ENCODE measurements at regions of chr19 and their contacts with region 1.

Region 1: GRCh38 chr19:56170261-56170660 is 5.5 kb upstream of the GALP start:
- DNase-seq: no peak
- H3K4me3 ChIP-seq: no peak overlapping the region
- H3K27ac ChIP-seq: no peak overlapping the region
- H3K4me1 ChIP-seq: no peaks in the 10 kb centered on the region
- H3K27me3 ChIP-seq: peaks cover 37% of the 10 kb centered on the region; the same call in 1 of the 2 replicates
- CTCF ChIP-seq: no peak
- EP300 ChIP-seq: no peak
- RAD21 ChIP-seq: no peak

Region 2: DNA sequence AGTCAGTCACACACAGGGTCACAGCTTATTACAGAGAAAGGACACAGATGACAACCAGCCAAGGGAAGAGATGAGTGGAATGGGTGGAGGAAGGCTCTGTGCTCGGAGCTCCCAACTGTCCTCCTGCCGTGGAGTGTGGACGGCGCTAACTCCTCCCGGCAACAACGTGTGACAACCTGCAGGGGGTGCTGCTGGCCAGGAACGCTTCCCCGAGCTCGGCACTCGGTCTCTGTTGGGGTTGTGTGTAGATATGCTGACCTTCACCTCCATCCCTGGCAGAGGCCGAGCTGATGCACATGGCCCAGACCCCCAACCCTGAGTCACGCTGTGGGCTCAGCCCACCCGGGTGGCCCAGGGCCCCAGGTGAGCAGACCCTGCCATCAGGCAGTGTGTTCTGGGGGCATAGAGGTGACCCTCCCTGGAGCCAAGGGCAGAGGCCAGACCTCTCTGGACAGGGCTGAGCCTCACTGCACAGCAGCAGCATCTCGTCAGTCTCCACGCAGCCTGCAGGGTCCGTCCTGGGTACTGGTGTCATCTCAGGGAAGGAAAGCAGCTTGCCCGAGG is 15.1 kb before region 1 on chr19:
- CTCF ChIA-PET with region 1: interaction called, 14 read pairs
- POLR2A ChIA-PET with region 1: no interaction called
- DNase-seq: peak; percentile 59
- H3K4me3 ChIP-seq: no peak overlapping the region
- H3K27ac ChIP-seq: no peak overlapping the region
- H3K4me1 ChIP-seq: no peaks in the 10 kb centered on the region; a peak in 1 of 4 replicates
- H3K27me3 ChIP-seq: no peaks in the 10 kb centered on the region
- CTCF ChIP-seq: peak; percentile 49
- EP300 ChIP-seq: no peak
- RAD21 ChIP-seq: peak; percentile 16